Mammary epithelial cell (primary cell): ENCODE measurements at regions of chr1 and their contacts with region 1.

Region 1: GRCh38 chr1:207181838-207182237 is 77.8 kb downstream of the C4BPA start:
- DNase-seq: peak; percentile 44
- H3K4me3 ChIP-seq: no peak overlapping the region
- H3K27ac ChIP-seq: no peak overlapping the region
- H3K4me1 ChIP-seq: no peaks in the 10 kb centered on the region
- H3K27me3 ChIP-seq: peaks cover 4% of the 10 kb centered on the region
- CTCF ChIP-seq: peak; percentile 41 to 71

Region 2: DNA sequence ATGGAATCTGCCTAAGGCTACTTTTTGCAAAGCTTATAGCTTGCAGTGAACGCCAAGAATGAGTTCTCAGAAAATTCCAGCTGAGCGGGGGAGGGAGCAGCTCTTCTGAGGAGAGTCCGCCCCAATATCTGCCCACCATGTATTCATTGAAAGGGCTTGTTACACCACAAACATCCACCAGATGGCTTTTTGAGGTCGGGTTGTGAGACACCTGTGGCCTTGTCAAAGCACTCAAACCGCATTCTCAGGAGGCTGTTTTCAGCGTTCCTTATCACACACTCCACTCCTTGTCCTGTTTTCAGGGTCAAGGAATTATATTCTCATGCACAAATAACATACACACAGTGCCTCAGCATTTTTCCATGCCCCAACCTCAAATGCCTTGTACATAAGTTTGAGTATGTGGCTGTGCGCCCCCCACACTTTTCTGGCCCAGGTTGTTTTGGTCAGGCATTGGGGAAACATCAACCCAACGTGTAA is 97.1 kb before region 1 on chr1:
- CTCF ChIA-PET with region 1: interaction called, 6 read pairs
- dilution Hi-C with region 1: no loop called
- in situ Hi-C with region 1: no loop called
- intact Hi-C with region 1: loop called (anchors 1 kb)
- DNase-seq: peak; percentile 59
- H3K4me3 ChIP-seq: no peak overlapping the region
- H3K27ac ChIP-seq: no peak overlapping the region
- H3K4me1 ChIP-seq: peaks cover 3% of the 10 kb centered on the region
- H3K27me3 ChIP-seq: no peaks in the 10 kb centered on the region
- CTCF ChIP-seq: peak; percentile 56 to 73

Region 3: GRCh38 chr1:207108998-207109397 is 72.8 kb before region 1 on chr1:
- CTCF ChIA-PET with region 1: no interaction called
- dilution Hi-C with region 1: no loop called
- in situ Hi-C with region 1: no loop called
- intact Hi-C with region 1: no loop called
- DNase-seq: no peak
- H3K4me3 ChIP-seq: no peak overlapping the region
- H3K27ac ChIP-seq: no peak overlapping the region
- H3K4me1 ChIP-seq: no peaks in the 10 kb centered on the region
- H3K27me3 ChIP-seq: peaks cover 3% of the 10 kb centered on the region
- CTCF ChIP-seq: no peak

Region 4: DNA sequence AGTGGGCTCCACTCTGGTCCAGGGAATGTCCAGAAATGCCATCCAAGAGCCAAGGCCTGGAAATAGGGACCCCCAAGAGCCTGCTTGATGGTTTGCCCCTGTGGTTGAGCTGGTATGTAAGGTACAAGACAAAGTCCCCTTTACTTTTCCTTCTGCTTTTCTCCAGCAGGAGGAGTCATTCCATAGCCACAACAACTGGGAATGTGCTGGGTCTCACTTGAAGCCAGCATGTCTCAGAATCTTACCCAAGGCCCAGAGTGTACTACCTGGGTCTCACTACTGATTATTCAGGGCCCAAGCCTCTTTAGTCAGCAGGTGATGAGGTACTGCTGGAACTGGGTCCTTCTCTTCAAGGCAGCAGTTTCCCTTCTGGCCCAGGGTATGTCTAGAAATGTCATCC is 77.6 kb after region 1 on chr1:
- CTCF ChIA-PET with region 1: no interaction called
- dilution Hi-C with region 1: no loop called
- in situ Hi-C with region 1: no loop called
- intact Hi-C with region 1: loop called (anchors 1 kb)
- DNase-seq: peak; percentile 29
- H3K4me3 ChIP-seq: no peak overlapping the region
- H3K27ac ChIP-seq: no peak overlapping the region
- H3K4me1 ChIP-seq: peaks cover 4% of the 10 kb centered on the region
- H3K27me3 ChIP-seq: no peaks in the 10 kb centered on the region
- CTCF ChIP-seq: peak; percentile 41 to 53

Region 5: GRCh38 chr1:207309775-207310273 is 128.0 kb after region 1 on chr1:
- CTCF ChIA-PET with region 1: no interaction called
- dilution Hi-C with region 1: no loop called
- in situ Hi-C with region 1: loop called in 1 of 2 experiments (anchors 10 kb)
- intact Hi-C with region 1: no loop called
- DNase-seq: peak; percentile 75
- H3K4me3 ChIP-seq: peak overlapping the region in 2 of 3 experiments; percentile 2 to 27
- H3K27ac ChIP-seq: peak overlapping the region; percentile 86
- H3K4me1 ChIP-seq: peaks cover 21% of the 10 kb centered on the region
- H3K27me3 ChIP-seq: no peaks in the 10 kb centered on the region
- CTCF ChIP-seq: no peak

Region 6: DNA sequence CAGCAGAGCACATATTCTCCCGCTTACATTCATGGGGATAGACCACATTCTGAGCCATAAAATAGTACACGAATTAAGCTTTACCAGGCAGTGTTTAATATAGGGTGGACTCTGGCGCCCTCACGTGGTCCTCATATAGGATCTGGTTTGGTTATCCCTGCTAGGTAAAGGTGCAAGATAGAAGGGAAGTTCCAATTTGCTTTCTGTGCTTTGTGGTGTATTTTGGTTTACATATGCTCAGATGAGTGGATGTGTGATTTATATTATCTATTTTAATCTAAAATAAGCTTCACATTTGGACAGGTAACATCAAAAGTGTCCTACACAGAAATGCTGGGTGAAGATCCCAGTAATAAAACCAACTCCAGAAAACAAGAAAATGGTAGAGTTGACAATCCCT is 317.7 kb after region 1 on chr1:
- CTCF ChIA-PET with region 1: no interaction called
- dilution Hi-C with region 1: no loop called
- in situ Hi-C with region 1: no loop called
- intact Hi-C with region 1: loop called (anchors 1 kb)
- DNase-seq: peak; percentile 47
- H3K4me3 ChIP-seq: no peak overlapping the region
- H3K27ac ChIP-seq: no peak overlapping the region
- H3K4me1 ChIP-seq: peaks cover 7% of the 10 kb centered on the region
- H3K27me3 ChIP-seq: peaks cover 13% of the 10 kb centered on the region
- CTCF ChIP-seq: peak; percentile 70 to 81